Heart right ventricle (tissue), 16 donors: ENCODE measurements at regions of chr10 and their contacts with region 1.

Region 1: DNA sequence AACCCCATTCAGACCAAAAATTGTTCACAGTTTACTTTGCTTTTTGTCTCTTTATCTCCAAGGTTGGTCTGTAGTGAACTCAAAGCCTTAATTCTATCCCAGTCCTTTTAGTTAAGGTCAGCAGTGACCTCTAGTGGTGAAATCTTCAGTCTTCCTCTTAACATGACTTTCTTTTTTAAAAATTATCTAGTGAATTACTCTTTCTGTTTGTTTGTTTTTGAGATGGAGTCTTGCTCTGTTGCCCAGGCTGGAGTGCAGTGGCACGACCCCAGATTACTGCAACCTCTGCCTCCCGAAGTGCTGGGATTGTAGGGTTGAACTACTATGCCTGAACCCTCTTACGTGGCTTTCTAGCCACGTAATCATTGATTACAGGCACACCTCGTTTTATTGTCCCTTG is 25.0 kb downstream of the ZNF487 start:
- DNase-seq: peak in 1 of 2 donors; percentile 59
- ATAC-seq: peak in 4 of 8 donors; percentile 64 to 73 (median 70)
- H3K4me3 ChIP-seq: peak overlapping the region in 2 of 10 donors; percentile 12 to 23
- H3K27ac ChIP-seq: no peak overlapping the region
- H3K4me1 ChIP-seq: peaks cover 0 to 7% (median 0%) of the 10 kb centered on the region in 9 donors
- H3K27me3 ChIP-seq: no peaks in the 10 kb centered on the region
- CTCF ChIP-seq: peak; percentile 62 to 86 (median 75)

Region 2: DNA sequence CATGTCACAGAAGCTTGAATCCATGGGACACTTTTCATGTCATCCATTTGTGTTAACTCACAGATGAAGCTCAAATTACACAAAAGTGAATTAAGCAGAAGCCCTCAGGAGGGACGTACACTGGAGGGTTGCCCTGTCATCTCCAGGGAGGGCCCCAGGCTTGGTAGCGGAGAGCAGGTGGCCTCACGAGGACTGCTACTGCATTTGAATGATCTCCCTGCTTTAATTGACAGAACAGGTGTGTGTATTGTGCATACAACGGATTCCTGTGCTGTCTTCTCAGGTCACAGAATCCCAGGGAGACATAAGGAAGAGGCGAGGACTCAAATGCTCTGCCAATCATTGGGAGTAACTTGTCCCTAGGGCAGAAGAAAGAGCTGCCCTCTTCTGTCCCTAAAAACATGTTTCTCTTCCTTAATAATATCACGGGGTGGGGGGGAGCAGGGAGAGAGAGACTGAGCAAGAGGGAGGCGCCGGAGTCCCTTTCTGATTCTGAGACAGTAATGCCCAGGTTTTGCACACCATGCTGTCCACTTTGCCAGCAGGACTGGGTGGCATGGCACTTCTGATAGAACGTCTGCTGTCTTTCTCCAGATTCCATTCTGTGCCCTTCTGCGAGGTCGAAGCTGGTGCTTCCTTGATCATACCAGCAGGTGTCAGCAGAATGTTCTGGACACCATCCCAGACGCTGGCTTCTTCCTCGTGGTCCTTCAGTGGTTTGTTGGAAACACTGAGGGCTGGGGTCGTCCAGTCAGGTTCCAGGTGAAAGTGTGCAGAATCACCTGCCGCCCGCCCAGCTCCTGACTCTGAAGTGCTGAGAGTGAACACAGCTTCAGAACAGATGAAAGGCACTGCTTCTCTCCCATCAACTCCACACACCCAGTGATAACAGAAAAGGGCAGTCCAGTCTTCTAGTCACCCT is 168.9 kb before region 1 on chr10:
- intact Hi-C with region 1: loop called in 9 of 10 experiments (anchors 1 to 5 kb)
- DNase-seq: peak in 1 of 2 donors; percentile 40
- ATAC-seq: peak; percentile 69 to 89 (median 77)
- H3K4me3 ChIP-seq: no peak overlapping the region
- H3K27ac ChIP-seq: no peak overlapping the region
- H3K4me1 ChIP-seq: peaks cover 0 to 22% (median 0%) of the 10 kb centered on the region in 9 donors
- H3K27me3 ChIP-seq: peaks cover 0 to 55% (median 41%) of the 10 kb centered on the region in 7 donors
- CTCF ChIP-seq: peak; percentile 48 to 80 (median 71)

Region 3: DNA sequence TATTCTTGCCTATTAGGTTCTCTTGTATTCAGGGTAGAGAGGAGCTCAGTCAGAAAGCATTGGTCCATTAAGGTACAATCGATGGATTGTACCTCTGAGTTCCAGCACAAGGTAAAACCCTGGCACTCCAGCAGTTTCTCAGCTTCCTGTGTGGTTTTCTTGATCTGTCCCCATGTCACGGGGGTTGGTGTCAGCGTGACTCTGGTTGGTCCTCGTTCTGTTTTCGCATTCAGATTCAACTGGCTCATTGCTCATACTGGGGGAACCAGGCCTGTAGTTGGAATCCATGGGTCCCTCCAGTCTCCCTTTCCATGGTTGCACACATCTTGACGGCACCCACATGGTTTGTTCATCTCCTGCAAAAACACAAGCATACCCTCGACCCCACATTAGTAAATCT is 162.4 kb before region 1 on chr10:
- intact Hi-C with region 1: loop called in 6 of 10 experiments (anchors 1 to 5 kb)
- DNase-seq: no peak
- ATAC-seq: no peak
- H3K4me3 ChIP-seq: no peak overlapping the region
- H3K27ac ChIP-seq: peak overlapping the region in 1 of 10 donors; percentile 34
- H3K4me1 ChIP-seq: peaks cover 0 to 16% (median 4%) of the 10 kb centered on the region in 9 donors
- H3K27me3 ChIP-seq: peaks cover 0 to 30% (median 15%) of the 10 kb centered on the region in 7 donors
- CTCF ChIP-seq: no peak